ENCODE measurements at regions of chr1 and their contacts with region 1.

Region 1: DNA sequence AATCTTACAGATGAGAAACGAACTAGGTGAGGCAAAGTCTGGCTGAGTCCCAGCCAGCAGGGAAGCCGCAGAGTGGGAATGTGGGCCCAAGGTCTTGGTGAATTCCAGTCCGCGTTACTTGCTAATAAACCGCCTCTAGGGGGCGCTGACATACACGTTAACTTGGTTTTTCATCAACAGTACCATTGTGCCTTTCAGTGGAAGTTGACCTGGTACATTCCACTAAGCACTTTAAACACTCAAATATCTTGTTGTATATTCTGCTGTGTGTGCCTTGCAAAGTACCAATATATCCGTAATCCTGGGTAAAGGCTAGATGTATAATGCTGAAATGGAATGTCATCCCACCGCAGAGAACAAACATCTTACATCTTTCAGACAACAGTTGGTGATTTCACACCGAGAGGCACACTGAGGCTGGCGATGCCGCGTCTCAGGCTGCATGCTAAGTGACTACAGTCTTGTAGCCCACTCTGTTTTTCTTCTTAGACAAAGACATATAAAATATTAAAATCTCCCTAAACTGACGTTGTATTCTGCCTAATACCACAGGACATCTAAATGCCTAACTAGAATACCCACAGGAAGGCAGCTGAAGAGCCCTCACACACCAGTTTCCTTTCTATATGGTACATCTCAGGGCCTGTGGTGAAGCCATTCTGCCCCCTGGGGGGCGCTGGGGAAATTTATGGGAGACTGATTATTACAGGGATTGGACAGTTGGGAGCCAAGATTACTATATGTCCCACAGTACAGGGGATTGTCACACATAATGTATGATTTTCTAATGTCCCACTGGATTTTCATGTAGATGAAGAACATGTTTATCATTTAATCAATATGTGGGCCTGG is 49.2 kb upstream of the C1orf198 start:
- DNase-seq: peak; percentile 44 to 74 (median 68)
- H3K4me3 ChIP-seq: no peak overlapping the region
- H3K4me3 Mint-ChIP-seq: no peak overlapping the region
- H3K27ac ChIP-seq: no peak overlapping the region
- H3K27ac Mint-ChIP-seq: peak overlapping the region in 1 of 7 donors; percentile 61
- H3K4me1 ChIP-seq: no peaks in the 10 kb centered on the region
- H3K4me1 Mint-ChIP-seq: no peaks in the 10 kb centered on the region
- H3K27me3 ChIP-seq: no peaks in the 10 kb centered on the region
- H3K27me3 Mint-ChIP-seq: no peaks in the 10 kb centered on the region
- CTCF ChIP-seq: peak; percentile 85

Region 2: GRCh38 chr1:230781594-230781993 is 135.9 kb before region 1 on chr1:
- intact Hi-C with region 1: no loop called
- DNase-seq: no peak
- H3K4me3 ChIP-seq: no peak overlapping the region
- H3K4me3 Mint-ChIP-seq: no peak overlapping the region
- H3K27ac ChIP-seq: no peak overlapping the region
- H3K27ac Mint-ChIP-seq: no peak overlapping the region
- H3K4me1 ChIP-seq: no peaks in the 10 kb centered on the region
- H3K4me1 Mint-ChIP-seq: no peaks in the 10 kb centered on the region
- H3K27me3 ChIP-seq: peaks cover 0 to 9% of the 10 kb centered on the region in 2 donors
- H3K27me3 Mint-ChIP-seq: peaks cover 3 to 6% (median 4%) of the 10 kb centered on the region in 3 donors
- CTCF ChIP-seq: no peak

Region 3: GRCh38 chr1:230978491-230979388 is 61.2 kb after region 1 on chr1 and contains the starts of genes ARV1 and TTC13:
- intact Hi-C with region 1: loop called (anchors 5 kb)
- DNase-seq: peak; percentile 96 to 99 (median 99)
- H3K4me3 ChIP-seq: peak within 1 kb of the TSS; percentile 60 to 81 (median 66)
- H3K4me3 Mint-ChIP-seq: peak within 1 kb of the TSS; percentile 90 to 98
- H3K27ac ChIP-seq: peak within 1 kb of the TSS; percentile 41 to 80
- H3K27ac Mint-ChIP-seq: peak within 1 kb of the TSS; percentile 89 to 96 (median 95)
- H3K4me1 ChIP-seq: peaks cover 31 to 36% of the 10 kb centered on the region in 2 donors
- H3K4me1 Mint-ChIP-seq: peaks cover 22% of the 10 kb centered on the region
- H3K27me3 ChIP-seq: no peaks in the 10 kb centered on the region
- H3K27me3 Mint-ChIP-seq: peaks cover 0 to 2% (median 0%) of the 10 kb centered on the region in 3 donors
- CTCF ChIP-seq: peak; percentile 60
- polyA plus RNA-seq, gene ARV1: 7.7 to 19.2 (median 15.0) TPM
- polyA plus RNA-seq, gene TTC13: 9.2 to 24.4 (median 10.8) TPM

Region 4: GRCh38 chr1:231091831-231092301 is 174.4 kb after region 1 on chr1:
- intact Hi-C with region 1: loop called in 1 of 2 experiments (anchors 5 kb)
- DNase-seq: peak in 2 of 3 donors; percentile 6 to 35
- H3K4me3 ChIP-seq: no peak overlapping the region
- H3K4me3 Mint-ChIP-seq: peak overlapping the region in 1 of 2 donors; percentile 36
- H3K27ac ChIP-seq: no peak overlapping the region
- H3K27ac Mint-ChIP-seq: no peak overlapping the region
- H3K4me1 ChIP-seq: peaks cover 0 to 10% of the 10 kb centered on the region in 2 donors
- H3K4me1 Mint-ChIP-seq: peaks cover 7% of the 10 kb centered on the region
- H3K27me3 ChIP-seq: no peaks in the 10 kb centered on the region
- H3K27me3 Mint-ChIP-seq: peaks cover 12 to 18% (median 15%) of the 10 kb centered on the region in 3 donors
- CTCF ChIP-seq: peak; percentile 65

Region 5: GRCh38 chr1:231211005-231211857 is 293.7 kb after region 1 on chr1:
- intact Hi-C with region 1: loop called (anchors 2 to 5 kb)
- DNase-seq: peak; percentile 29 to 57 (median 55)
- H3K4me3 ChIP-seq: peak overlapping the region; percentile 18 to 69 (median 46)
- H3K4me3 Mint-ChIP-seq: peak overlapping the region; percentile 97 to 98
- H3K27ac ChIP-seq: no peak overlapping the region
- H3K27ac Mint-ChIP-seq: peak overlapping the region in 3 of 7 donors; percentile 40 to 79 (median 76)
- H3K4me1 ChIP-seq: peaks cover 4 to 5% of the 10 kb centered on the region in 2 donors
- H3K4me1 Mint-ChIP-seq: peaks cover 7% of the 10 kb centered on the region
- H3K27me3 ChIP-seq: peaks cover 0 to 3% of the 10 kb centered on the region in 2 donors
- H3K27me3 Mint-ChIP-seq: peaks cover 8 to 10% (median 9%) of the 10 kb centered on the region in 3 donors
- CTCF ChIP-seq: peak; percentile 93